Endothelial cell of umbilical vein (primary cell): ENCODE measurements at regions of chr4 and their contacts with region 1.

Region 1: GRCh38 chr4:84582302-84583000 is 476 bp upstream of the CDS1 start:
- DNase-seq: peak; percentile 50
- H3K4me3 ChIP-seq: peak overlapping the region; percentile 32 to 52 (median 36)
- H3K27ac ChIP-seq: no peak overlapping the region
- H3K4me1 ChIP-seq: peaks cover 13% of the 10 kb centered on the region
- H3K27me3 ChIP-seq: peaks cover 50 to 67% of the 10 kb centered on the region in 2 experiments
- CTCF ChIP-seq: no peak
- POLR2A ChIP-seq: no peak

Region 2: DNA sequence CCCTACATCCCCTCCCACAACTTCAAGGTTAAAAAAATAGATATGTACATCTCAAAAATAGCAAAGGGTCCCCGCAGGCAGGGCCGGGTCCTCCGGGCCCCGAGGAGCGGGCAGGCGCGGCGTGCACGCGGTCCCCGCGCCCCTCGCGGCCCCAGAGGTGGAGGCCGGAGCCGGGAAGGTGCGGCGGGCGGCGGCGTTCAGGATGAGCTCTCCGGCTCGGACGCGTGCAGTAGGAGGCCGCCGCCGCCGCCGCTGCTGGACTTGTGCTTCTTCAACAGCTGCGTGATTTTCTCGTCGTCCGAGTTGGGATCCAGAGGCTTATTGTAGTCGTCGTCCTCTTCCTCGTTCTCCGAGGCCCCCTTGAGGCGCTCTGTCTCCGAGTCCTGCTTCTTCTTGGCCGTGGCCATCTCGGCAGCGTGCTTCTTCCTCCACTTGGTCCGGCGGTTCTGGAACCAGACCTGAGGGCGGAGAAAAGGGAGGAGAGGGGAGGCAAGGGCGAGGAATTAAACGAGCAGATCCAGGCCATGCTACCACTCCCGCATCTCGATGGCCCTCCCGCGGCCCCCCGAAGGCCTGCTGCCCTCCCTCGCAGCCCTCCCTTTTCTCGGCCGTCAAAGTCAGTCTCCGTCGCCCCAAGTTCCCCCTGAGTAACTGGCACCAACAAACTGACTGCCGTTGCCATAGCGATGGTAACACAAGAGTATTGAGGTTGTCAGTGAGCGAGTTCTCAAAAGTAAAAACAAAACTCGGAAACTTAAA is 89.2 kb before region 1 on chr4:
- CTCF ChIA-PET with region 1: no interaction called
- POLR2A ChIA-PET with region 1: no interaction called
- dilution Hi-C with region 1: no loop called
- intact Hi-C with region 1: no loop called
- DNase-seq: no peak
- H3K4me3 ChIP-seq: no peak overlapping the region
- H3K27ac ChIP-seq: no peak overlapping the region
- H3K4me1 ChIP-seq: peaks cover 6% of the 10 kb centered on the region
- H3K27me3 ChIP-seq: peaks cover 75 to 100% of the 10 kb centered on the region in 2 experiments
- CTCF ChIP-seq: peak in 1 of 2 donors; percentile 33
- POLR2A ChIP-seq: no peak

Region 3: DNA sequence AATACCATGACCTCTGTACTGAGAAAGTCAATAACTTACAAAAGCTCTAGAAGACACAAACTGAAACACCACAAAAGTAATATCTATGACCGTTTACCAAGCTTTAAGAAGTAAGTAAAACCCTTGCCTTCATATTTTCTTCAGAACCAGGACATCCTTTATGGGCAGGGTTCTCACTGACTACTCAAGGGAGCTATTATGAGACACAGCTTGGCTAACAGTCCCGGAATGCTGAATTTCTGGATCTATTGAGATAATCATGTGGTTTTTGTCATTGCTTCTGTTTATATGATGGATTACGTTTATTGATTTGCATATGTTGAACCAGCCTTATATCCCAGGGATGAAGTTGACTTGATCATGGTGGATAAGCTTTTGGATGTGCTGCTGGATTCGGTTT is 19.4 kb before region 1 on chr4:
- CTCF ChIA-PET with region 1: interaction called, 11 read pairs
- POLR2A ChIA-PET with region 1: no interaction called
- dilution Hi-C with region 1: no loop called
- intact Hi-C with region 1: no loop called
- DNase-seq: no peak
- H3K4me3 ChIP-seq: no peak overlapping the region
- H3K27ac ChIP-seq: no peak overlapping the region
- H3K4me1 ChIP-seq: no peaks in the 10 kb centered on the region
- H3K27me3 ChIP-seq: no peaks in the 10 kb centered on the region
- CTCF ChIP-seq: no peak
- POLR2A ChIP-seq: no peak

Region 4: GRCh38 chr4:84568496-84568895 is 14.0 kb before region 1 on chr4:
- CTCF ChIA-PET with region 1: interaction called, 11 read pairs
- POLR2A ChIA-PET with region 1: no interaction called
- dilution Hi-C with region 1: no loop called
- intact Hi-C with region 1: no loop called
- DNase-seq: no peak
- H3K4me3 ChIP-seq: no peak overlapping the region
- H3K27ac ChIP-seq: no peak overlapping the region
- H3K4me1 ChIP-seq: no peaks in the 10 kb centered on the region
- H3K27me3 ChIP-seq: peaks cover 0 to 9% of the 10 kb centered on the region in 2 experiments
- CTCF ChIP-seq: no peak
- POLR2A ChIP-seq: no peak